A673 (cell line): ENCODE measurements at regions of chr4 and their contacts with region 1.

Region 1: DNA sequence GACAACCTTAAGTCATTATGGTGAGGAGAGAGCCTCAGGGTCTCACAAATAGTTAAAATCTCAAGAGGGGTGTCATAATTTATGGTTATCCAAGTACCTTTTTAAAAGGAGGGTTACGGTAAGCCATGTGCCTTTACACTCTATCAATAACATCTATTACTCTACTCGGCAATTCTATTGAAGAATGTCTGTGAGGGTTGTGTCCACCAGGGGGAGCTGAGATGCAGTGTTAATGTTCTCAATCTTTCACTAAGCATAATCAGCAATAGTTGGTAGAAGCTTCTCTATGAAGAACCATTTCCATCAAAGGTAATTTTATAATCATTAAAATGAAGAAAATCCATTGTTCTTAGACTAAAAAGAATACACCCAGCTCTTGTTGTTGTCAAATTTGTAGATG is 457.4 kb downstream of the CENPC start:
- DNase-seq: peak; percentile 35
- H3K4me3 ChIP-seq: no peak overlapping the region
- H3K27ac ChIP-seq: no peak overlapping the region
- H3K4me1 ChIP-seq: no peaks in the 10 kb centered on the region
- H3K27me3 ChIP-seq: no peaks in the 10 kb centered on the region
- CTCF ChIP-seq: peak; percentile 56

Region 2: DNA sequence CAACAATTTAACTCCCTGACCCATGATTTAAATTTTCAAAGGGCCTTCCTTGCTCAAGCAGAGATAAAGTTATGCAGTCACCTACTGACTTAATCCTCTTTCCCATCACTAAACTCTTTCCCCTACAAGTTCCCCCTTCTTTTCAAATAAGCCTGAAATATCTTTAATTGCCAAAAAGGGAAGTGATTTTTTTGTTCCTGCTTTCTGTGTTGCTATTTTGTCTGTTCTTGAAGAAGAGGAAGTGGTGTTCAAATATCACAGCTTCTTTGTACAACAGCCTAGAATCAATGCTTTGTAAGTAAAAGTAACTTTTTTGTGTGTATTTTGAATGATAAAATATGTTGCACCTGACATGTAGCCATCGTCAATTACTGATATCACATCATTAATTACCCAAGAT is 138.5 kb before region 1 on chr4:
- CTCF ChIA-PET with region 1: no interaction called
- POLR2A ChIA-PET with region 1: no interaction called
- intact Hi-C with region 1: no loop called
- DNase-seq: no peak
- H3K4me3 ChIP-seq: no peak overlapping the region
- H3K27ac ChIP-seq: no peak overlapping the region
- H3K4me1 ChIP-seq: no peaks in the 10 kb centered on the region
- H3K27me3 ChIP-seq: no peaks in the 10 kb centered on the region
- CTCF ChIP-seq: no peak

Region 3: DNA sequence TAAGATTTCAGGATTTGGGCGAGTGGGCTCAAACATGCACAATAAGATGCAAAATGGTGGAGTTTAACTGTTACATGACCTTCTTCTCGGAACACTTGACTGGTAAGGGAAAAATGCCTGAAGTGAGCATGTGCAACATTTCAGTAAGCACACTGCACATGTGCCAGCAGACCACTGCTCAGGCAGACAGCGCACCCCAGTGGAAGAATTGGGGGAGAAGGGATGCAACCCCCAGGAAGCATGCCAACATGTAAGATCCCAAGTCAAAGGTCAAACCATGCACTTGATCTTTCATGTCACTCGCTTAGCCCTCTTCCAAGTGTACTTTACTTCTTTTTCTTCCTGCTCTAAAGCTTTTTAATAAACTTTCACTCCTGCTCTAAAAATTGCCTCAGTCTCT is 201.1 kb after region 1 on chr4:
- CTCF ChIA-PET with region 1: no interaction called
- POLR2A ChIA-PET with region 1: no interaction called
- intact Hi-C with region 1: loop called (anchors 5 kb)
- DNase-seq: peak; percentile 53
- H3K4me3 ChIP-seq: no peak overlapping the region
- H3K27ac ChIP-seq: no peak overlapping the region
- H3K4me1 ChIP-seq: peaks cover 3% of the 10 kb centered on the region
- H3K27me3 ChIP-seq: no peaks in the 10 kb centered on the region
- CTCF ChIP-seq: peak; percentile 63

Region 4: GRCh38 chr4:67327262-67328017 is 239.5 kb after region 1 on chr4:
- CTCF ChIA-PET with region 1: interaction called, 5 read pairs
- POLR2A ChIA-PET with region 1: no interaction called
- intact Hi-C with region 1: loop called (anchors 5 kb)
- DNase-seq: peak; percentile 67
- H3K4me3 ChIP-seq: no peak overlapping the region
- H3K27ac ChIP-seq: no peak overlapping the region
- H3K4me1 ChIP-seq: peaks cover 5% of the 10 kb centered on the region
- H3K27me3 ChIP-seq: no peaks in the 10 kb centered on the region
- CTCF ChIP-seq: peak; percentile 66